OCI-LY7 (cell line): ENCODE measurements at regions of chr7 and their contacts with region 1.

Region 1: DNA sequence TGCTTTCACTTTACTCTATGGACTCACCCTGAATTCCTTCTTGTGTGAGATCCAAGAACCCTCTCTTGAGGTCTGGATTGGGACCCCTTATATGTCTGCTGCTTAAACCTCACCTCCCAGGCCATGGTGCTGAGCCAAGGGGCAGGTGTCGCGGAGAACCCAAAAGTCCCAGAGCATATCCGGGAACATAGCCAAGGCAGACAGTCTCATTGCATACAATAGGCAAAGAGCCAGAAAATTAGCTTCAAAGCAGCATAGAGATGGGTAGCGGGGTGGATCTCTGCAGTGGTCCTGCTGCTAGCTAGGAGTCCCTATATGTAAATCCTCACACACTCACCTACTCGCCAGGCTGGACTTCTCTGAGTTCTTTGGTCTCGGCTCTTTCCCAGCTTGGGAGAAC is 5.5 kb downstream of the CCL24 start:
- DNase-seq: no peak
- H3K4me3 ChIP-seq: no peak overlapping the region
- H3K27ac ChIP-seq: no peak overlapping the region
- H3K4me1 ChIP-seq: peaks cover 3% of the 10 kb centered on the region
- CTCF ChIP-seq: no peak

Region 2: DNA sequence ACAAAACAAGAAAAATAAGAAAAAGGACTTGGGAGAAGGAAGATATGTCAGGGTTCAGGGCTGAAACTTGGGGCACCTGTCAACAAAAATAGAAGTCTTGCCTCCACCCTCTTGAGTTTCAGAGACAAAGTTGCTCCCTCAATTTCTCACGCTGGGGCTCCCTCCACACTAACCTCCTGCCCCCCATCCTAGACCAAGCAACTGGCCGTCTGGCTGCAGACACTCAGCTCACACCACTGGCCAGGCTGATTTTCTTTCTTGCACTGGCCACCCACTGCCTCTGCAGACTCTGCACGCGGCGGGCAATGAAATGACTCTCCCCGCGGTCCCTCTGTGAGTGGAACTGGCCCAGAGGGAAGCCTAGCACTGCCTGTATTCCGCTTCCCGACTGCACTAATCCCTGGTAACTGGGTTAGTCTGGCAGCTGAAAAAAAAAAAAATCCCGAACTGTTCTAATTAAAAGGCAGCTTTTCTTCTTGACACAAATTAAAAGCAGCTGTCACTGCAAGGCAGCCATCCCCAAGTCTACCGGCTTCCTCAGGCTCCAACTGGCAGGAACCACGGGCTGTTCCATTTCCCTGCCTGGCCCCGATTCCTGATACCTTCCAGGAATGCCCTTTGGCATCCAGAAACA is 232.5 kb before region 1 on chr7:
- CTCF ChIA-PET with region 1: no interaction called
- POLR2A ChIA-PET with region 1: no interaction called
- intact Hi-C with region 1: loop called (anchors 10 kb)
- DNase-seq: no peak
- H3K4me3 ChIP-seq: no peak overlapping the region
- H3K27ac ChIP-seq: no peak overlapping the region
- H3K4me1 ChIP-seq: no peaks in the 10 kb centered on the region
- CTCF ChIP-seq: no peak

Region 3: DNA sequence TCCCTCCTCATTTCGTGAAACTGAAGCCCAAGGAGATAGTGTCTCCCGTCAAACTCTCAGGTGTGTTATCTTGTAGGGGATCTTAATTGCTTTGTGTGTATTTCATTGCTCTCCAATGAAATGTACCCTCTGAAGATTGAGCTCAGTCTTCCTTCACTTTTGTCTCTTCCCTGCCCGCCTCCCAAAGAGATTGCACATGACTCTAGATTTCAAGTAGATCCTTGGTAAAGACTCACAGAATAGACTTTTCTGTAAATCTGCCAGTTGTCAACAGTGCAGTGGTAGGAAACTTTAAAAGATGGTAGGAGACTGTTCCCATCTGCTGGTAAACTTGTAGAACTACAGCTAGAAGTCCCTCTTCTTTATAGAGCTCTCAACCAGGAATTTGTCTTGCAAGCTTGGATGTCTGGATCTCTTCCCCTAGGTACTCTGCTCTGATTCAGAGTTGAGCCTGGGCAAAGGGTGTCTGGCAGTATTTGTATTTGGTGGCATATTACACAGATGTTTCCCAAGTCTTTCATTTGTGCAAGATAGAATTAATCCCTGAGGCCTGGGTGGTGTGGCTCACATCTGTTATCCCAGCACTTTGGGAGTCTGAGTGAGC is 45.7 kb before region 1 on chr7:
- CTCF ChIA-PET with region 1: no interaction called
- POLR2A ChIA-PET with region 1: no interaction called
- intact Hi-C with region 1: no loop called
- DNase-seq: peak; percentile 84
- H3K4me3 ChIP-seq: no peak overlapping the region
- H3K27ac ChIP-seq: peak overlapping the region; percentile 35
- H3K4me1 ChIP-seq: peaks cover 9% of the 10 kb centered on the region
- CTCF ChIP-seq: peak; percentile 92